ENCODE measurements at regions of chr1 and their contacts with region 1.

Region 1: GRCh38 chr1:45687754-45688740 is at the start of gene TMEM69:
- DNase-seq: peak; percentile 85
- H3K4me3 ChIP-seq: peak within 1 kb of the TSS; percentile 45 to 97 (median 94)
- H3K27ac ChIP-seq: peak within 1 kb of the TSS; percentile 93 to 100 (median 98)
- H3K4me1 ChIP-seq: peaks cover 31 to 69% (median 47%) of the 10 kb centered on the region in 6 donors
- H3K27me3 ChIP-seq: no peaks in the 10 kb centered on the region
- CTCF ChIP-seq: peak in 4 of 11 experiments; percentile 16 to 24 (median 20)
- POLR2A ChIP-seq: peak in 1 of 3 donors; percentile 13
- total RNA-seq, gene TMEM69: 16.4 to 32.7 (median 19.9) TPM

Region 2: GRCh38 chr1:45750298-45751038 is 62.4 kb after region 1 on chr1 and contains the start of gene IPP:
- intact Hi-C with region 1: loop called (anchors 2 kb)
- DNase-seq: peak; percentile 100
- H3K4me3 ChIP-seq: peak within 1 kb of the TSS; percentile 46 to 75 (median 50)
- H3K27ac ChIP-seq: peak within 1 kb of the TSS; percentile 84 to 99 (median 97)
- H3K4me1 ChIP-seq: peaks cover 3 to 35% (median 20%) of the 10 kb centered on the region in 6 donors
- H3K27me3 ChIP-seq: no peaks in the 10 kb centered on the region
- CTCF ChIP-seq: peak in 6 of 11 experiments; percentile 15 to 51 (median 40)
- POLR2A ChIP-seq: peak in 2 of 3 donors; percentile 57 to 78
- total RNA-seq, gene IPP: 7.6 to 13.4 (median 10.8) TPM